ENCODE measurements at regions of chr3 and their contacts with region 1.

Region 1: GRCh38 chr3:124761250-124761796 is 31.1 kb downstream of the UMPS start:
- DNase-seq: peak; percentile 77
- H3K4me3 ChIP-seq: no peak overlapping the region
- H3K27ac ChIP-seq: no peak overlapping the region
- H3K27me3 ChIP-seq: no peaks in the 10 kb centered on the region
- CTCF ChIP-seq: peak; percentile 98

Region 2: DNA sequence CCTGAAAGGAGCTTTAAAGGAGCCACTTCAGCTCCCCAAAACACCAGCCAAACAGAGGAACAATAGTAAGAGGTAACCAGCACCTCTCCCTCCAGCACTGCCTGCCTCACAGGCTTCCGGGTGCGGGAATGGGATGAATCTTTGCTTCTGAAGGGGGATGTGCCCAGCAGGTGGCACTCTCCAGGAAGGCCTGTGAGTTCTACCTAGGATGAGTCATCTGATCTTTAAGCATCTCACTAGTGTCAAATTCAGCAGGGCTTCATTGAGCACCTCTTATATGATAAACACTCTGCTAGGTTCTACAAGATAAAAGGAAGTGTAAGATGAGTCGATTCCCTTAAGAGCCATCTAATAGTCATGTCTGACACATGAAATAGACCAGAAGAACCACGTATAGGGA is 268.5 kb before region 1 on chr3:
- CTCF ChIA-PET with region 1: no interaction called
- POLR2A ChIA-PET with region 1: no interaction called
- DNase-seq: peak; percentile 3
- H3K4me3 ChIP-seq: no peak overlapping the region
- H3K27ac ChIP-seq: no peak overlapping the region
- H3K27me3 ChIP-seq: peaks cover 2% of the 10 kb centered on the region
- CTCF ChIP-seq: peak; percentile 43

Region 3: GRCh38 chr3:124584552-124585391 is 176.6 kb before region 1 on chr3:
- CTCF ChIA-PET with region 1: no interaction called
- POLR2A ChIA-PET with region 1: no interaction called
- DNase-seq: no peak
- H3K4me3 ChIP-seq: peak overlapping the region; percentile 45
- H3K27ac ChIP-seq: no peak overlapping the region
- H3K27me3 ChIP-seq: peaks cover 63% of the 10 kb centered on the region
- CTCF ChIP-seq: no peak

Region 4: GRCh38 chr3:124786441-124787241 is 25.3 kb after region 1 on chr3:
- CTCF ChIA-PET with region 1: interaction called, 27 read pairs
- POLR2A ChIA-PET with region 1: interaction called, 3 read pairs
- DNase-seq: no peak
- H3K4me3 ChIP-seq: no peak overlapping the region
- H3K27ac ChIP-seq: no peak overlapping the region
- H3K27me3 ChIP-seq: no peaks in the 10 kb centered on the region
- CTCF ChIP-seq: peak; percentile 52

Region 5: GRCh38 chr3:124895756-124896155 is 134.4 kb after region 1 on chr3:
- CTCF ChIA-PET with region 1: interaction called, 177 read pairs
- POLR2A ChIA-PET with region 1: no interaction called
- DNase-seq: no peak
- H3K4me3 ChIP-seq: no peak overlapping the region
- H3K27ac ChIP-seq: no peak overlapping the region
- H3K27me3 ChIP-seq: no peaks in the 10 kb centered on the region
- CTCF ChIP-seq: no peak

Region 6: DNA sequence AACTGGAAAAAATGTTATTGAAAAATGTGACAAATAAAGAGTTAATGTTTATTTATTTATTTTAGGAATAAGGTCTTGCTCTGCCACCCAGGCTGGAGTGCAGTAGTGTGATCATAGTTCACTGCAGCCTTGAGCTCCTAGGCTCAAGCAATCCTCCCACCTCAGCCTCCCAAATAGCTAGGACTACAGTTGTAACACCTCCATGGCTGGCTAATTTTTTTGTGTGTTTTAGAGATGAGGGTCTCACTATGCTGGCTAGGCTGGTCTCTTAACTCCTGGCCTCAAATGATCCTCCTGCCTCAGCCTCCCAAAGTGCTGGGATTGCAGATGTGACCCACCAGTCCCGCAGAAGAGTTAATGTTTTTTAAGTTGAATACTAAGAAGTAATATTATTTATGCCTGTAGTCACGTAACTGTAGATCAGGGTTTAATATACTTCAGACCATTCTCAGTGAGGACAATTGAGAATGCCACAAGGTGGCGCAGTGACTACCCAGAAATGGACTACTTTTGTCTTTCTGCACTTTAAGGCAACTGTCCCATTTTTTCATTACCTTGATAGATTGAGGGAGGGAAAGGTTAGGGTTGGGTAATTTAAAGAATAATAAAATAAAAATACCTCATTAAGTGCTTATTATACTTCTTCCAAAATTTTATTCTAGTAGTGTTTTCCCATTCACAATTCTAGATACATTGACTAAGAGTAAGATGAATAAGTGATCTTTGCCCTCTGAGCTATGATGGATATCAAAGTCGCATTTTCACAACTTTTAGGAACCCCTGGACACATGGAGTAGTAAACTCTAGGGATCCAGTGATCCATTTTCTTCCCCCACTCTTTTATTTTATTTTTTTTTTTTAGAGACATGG is 167.2 kb after region 1 on chr3:
- CTCF ChIA-PET with region 1: interaction called, 10 read pairs
- POLR2A ChIA-PET with region 1: no interaction called
- DNase-seq: peak; percentile 44
- H3K4me3 ChIP-seq: no peak overlapping the region
- H3K27ac ChIP-seq: no peak overlapping the region
- H3K27me3 ChIP-seq: peaks cover 5% of the 10 kb centered on the region
- CTCF ChIP-seq: peak; percentile 83

Region 7: DNA sequence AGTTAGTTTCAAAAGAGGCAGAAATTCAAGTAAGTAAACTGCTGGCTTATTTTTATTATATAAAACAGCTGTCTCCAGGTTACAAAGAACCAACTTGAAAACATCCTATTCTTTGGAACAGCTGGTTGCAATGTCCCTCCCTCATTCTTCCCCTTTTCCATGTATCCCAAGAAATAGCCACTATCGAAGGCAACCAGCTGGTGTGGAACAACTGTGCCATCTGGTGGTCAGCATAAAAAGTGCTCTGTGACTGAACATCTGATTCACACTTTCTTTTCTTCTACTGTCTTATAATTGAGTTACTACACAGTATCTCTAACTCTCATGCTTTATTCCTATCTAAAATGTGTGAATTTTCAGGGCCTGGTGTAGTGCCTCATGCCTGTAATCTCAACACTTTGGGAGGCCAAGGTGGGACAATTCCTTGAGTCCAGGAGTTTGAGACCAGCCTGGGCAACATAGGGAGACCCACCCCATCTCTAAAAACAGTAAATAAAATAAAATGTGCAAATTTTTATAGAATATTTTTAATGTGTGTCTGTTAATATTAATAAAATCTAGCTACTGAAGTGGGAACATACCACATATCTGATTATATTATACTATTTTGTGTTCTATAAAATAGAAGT is 824.4 kb after region 1 on chr3:
- CTCF ChIA-PET with region 1: interaction called, 22 read pairs
- POLR2A ChIA-PET with region 1: no interaction called
- DNase-seq: peak; percentile 66
- H3K4me3 ChIP-seq: no peak overlapping the region
- H3K27ac ChIP-seq: no peak overlapping the region
- H3K27me3 ChIP-seq: no peaks in the 10 kb centered on the region
- CTCF ChIP-seq: peak; percentile 94